Mammary epithelial cell (primary cell): ENCODE measurements at regions of chr7 and their contacts with region 1.

Region 1: GRCh38 chr7:48299580-48300169 is 128.4 kb downstream of the ABCA13 start:
- DNase-seq: peak; percentile 77
- H3K4me3 ChIP-seq: no peak overlapping the region
- H3K27ac ChIP-seq: peak overlapping the region; percentile 61
- H3K4me1 ChIP-seq: peaks cover 14% of the 10 kb centered on the region
- H3K27me3 ChIP-seq: no peaks in the 10 kb centered on the region
- CTCF ChIP-seq: peak; percentile 77 to 92

Region 2: GRCh38 chr7:47690902-47691558 is 608.6 kb before region 1 on chr7:
- CTCF ChIA-PET with region 1: no interaction called
- dilution Hi-C with region 1: no loop called
- in situ Hi-C with region 1: no loop called
- intact Hi-C with region 1: no loop called
- DNase-seq: no peak
- H3K4me3 ChIP-seq: no peak overlapping the region
- H3K27ac ChIP-seq: no peak overlapping the region
- H3K4me1 ChIP-seq: peaks cover 2% of the 10 kb centered on the region
- H3K27me3 ChIP-seq: no peaks in the 10 kb centered on the region
- CTCF ChIP-seq: no peak

Region 3: DNA sequence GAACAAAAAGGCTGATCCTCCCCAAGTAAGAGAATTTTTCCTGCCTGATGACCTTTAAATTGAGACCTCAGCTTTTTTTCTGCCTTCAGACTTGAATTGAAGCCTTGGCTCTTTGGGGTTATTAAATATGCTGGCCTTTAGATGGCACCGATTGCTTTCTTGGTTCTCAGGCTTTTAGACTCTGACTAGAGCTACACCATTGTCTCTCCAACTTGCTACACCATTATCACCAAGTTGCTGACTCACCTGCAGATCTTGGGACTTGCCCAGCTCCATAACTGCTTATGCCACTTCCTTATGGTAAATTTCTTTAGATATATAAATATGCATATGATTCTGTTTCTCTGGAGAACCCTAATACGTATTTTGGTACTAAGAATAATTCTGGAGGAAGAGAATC is 131.5 kb before region 1 on chr7:
- CTCF ChIA-PET with region 1: no interaction called
- dilution Hi-C with region 1: no loop called
- in situ Hi-C with region 1: no loop called
- intact Hi-C with region 1: loop called (anchors 1 kb)
- DNase-seq: peak; percentile 84
- H3K4me3 ChIP-seq: no peak overlapping the region
- H3K27ac ChIP-seq: no peak overlapping the region
- H3K4me1 ChIP-seq: peaks cover 10% of the 10 kb centered on the region
- H3K27me3 ChIP-seq: no peaks in the 10 kb centered on the region
- CTCF ChIP-seq: peak in 1 of 2 donors; percentile 42

Region 4: DNA sequence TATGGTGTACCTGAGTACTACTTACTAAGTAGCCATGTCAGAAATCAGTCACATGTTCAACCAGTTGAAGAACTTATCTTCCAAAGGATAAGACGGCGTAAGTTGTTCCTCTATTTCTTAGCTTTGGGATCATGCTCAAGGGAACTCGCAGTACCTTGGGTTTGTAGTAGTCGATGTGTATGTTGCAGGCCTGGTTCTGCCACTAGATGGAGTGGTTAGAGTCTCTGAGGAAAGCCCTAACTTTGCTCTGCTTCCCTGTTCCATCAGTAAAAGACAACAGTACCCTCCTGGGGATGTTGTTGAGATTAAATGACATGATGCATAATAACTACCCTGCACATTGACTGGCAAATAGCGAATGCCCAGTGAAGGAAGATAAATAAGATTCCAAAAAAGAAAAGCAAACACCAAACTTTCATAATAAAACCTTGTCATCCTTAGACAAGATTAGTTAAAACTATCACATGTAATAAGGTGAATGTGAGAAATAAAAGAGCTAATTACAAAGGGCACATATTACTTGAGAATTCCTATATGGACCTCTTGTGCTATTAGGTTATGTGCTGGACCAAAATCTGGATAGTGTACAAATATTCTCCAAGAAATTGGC is 37.4 kb after region 1 on chr7:
- CTCF ChIA-PET with region 1: no interaction called
- dilution Hi-C with region 1: no loop called
- in situ Hi-C with region 1: no loop called
- intact Hi-C with region 1: loop called (anchors 1 kb)
- DNase-seq: peak; percentile 28
- H3K4me3 ChIP-seq: no peak overlapping the region
- H3K27ac ChIP-seq: no peak overlapping the region
- H3K4me1 ChIP-seq: no peaks in the 10 kb centered on the region
- H3K27me3 ChIP-seq: no peaks in the 10 kb centered on the region
- CTCF ChIP-seq: peak; percentile 77 to 87

Region 5: DNA sequence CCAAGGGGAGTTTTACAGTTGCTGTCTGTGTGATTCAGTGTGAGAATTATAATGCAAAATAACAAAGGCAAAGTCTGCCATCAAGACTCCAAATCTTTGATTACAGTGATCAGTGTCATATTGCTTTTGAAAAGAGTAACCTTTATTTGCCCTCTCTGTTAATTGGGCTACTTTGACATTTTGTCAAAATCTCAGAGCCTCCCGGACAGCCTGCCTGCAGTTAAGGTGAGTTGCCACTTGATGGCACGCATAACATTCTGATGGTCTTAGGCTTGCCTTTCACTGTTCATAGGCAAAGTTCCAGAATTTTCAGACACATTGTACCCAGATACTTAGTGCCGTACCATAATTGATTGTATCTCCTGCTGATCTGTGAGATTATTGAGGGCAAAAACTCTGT is 125.1 kb after region 1 on chr7:
- CTCF ChIA-PET with region 1: no interaction called
- dilution Hi-C with region 1: no loop called
- in situ Hi-C with region 1: no loop called
- intact Hi-C with region 1: loop called (anchors 1 kb)
- DNase-seq: peak; percentile 48
- H3K4me3 ChIP-seq: no peak overlapping the region
- H3K27ac ChIP-seq: no peak overlapping the region
- H3K4me1 ChIP-seq: peaks cover 56% of the 10 kb centered on the region
- H3K27me3 ChIP-seq: no peaks in the 10 kb centered on the region
- CTCF ChIP-seq: peak; percentile 89 to 94

Region 6: DNA sequence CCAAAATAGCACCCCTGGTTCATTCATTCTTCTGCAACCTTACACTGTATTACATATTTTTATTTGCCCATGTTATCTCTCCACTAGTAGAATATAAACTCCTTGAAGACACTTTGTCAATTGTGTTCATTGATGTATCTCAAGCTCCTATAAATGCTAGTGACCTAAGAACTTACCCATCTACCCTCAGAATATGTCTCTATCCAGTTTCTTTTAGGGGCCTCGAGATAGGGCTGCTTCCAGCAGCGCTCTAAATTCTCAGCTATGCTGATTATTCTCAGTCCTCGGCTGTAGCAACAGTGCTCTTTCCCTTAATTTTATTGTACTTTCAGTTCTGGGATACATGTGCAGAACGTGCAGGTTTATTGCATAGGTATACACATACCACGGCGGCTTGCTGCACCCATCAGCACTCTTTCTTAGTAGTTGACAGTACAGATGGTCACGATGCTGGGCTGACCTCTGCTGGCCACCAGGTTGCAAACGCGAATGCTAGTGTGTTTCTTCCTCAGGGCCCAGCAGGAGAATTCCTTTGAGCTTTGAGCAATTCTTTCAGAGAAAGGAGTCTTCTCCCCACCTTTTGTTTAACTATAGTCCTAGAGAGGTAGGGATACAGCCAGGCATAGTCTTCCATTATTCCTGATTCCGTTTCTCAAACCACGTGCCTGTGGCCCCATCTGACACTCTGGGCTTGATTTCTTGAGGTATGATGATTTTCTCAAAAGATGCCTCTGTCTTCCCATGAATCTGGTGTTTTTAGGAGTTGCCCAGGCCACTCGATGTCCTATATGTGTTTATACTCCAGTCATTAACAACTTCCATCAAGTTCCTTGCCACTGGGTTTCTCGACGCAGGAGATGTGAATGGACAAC is 575.6 kb after region 1 on chr7:
- CTCF ChIA-PET with region 1: no interaction called
- dilution Hi-C with region 1: no loop called
- in situ Hi-C with region 1: loop called in 1 of 2 experiments (anchors 25 kb)
- intact Hi-C with region 1: loop called (anchors 1 kb)
- DNase-seq: peak; percentile 41
- H3K4me3 ChIP-seq: no peak overlapping the region
- H3K27ac ChIP-seq: no peak overlapping the region
- H3K4me1 ChIP-seq: no peaks in the 10 kb centered on the region
- H3K27me3 ChIP-seq: no peaks in the 10 kb centered on the region
- CTCF ChIP-seq: peak; percentile 68 to 88

Region 7: GRCh38 chr7:49166441-49166840 is 866.8 kb after region 1 on chr7:
- CTCF ChIA-PET with region 1: no interaction called
- dilution Hi-C with region 1: no loop called
- in situ Hi-C with region 1: no loop called
- intact Hi-C with region 1: loop called (anchors 1 kb)
- DNase-seq: no peak
- H3K4me3 ChIP-seq: no peak overlapping the region
- H3K27ac ChIP-seq: no peak overlapping the region
- H3K4me1 ChIP-seq: no peaks in the 10 kb centered on the region
- H3K27me3 ChIP-seq: no peaks in the 10 kb centered on the region
- CTCF ChIP-seq: peak; percentile 3 to 34